ENCODE measurements at regions of chr12 and their contacts with region 1.

Region 1: DNA sequence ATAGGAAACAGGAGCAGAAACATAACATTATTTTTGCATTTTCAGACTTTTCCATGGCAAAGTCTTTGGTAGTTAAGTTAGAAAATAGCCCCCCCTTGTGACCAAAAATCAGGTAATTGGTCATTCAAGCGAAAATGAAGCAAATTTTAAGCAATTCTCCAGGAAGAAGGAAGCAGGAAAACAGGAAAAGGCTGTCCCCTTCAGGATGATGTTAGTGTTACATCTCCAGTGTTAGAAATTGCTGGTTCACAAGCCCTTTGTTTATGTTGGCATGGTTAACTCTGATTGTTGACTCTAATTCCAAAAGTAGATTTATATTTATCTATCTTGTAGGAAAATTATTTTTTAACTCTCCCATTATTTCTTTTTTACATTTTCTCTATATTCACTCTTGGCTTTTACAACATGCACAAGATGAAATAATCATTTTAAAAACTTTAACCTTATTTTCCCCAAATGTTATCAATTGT is 18.8 kb upstream of the GAS2L3 start:
- DNase-seq: peak; percentile 92
- ATAC-seq: peak; percentile 88
- H3K4me3 ChIP-seq: no peak overlapping the region
- H3K27ac ChIP-seq: no peak overlapping the region
- H3K4me1 ChIP-seq: no peaks in the 10 kb centered on the region
- H3K27me3 ChIP-seq: 0 out of 2 replicates have a peak, but pooled peaks cover 6% of the 10 kb centered on the region
- CTCF ChIP-seq: peak; percentile 98

Region 2: GRCh38 chr12:100058482-100059029 is 496.1 kb before region 1 on chr12:
- CTCF ChIA-PET with region 1: no interaction called
- POLR2A ChIA-PET with region 1: no interaction called
- intact Hi-C with region 1: loop called (anchors 10 kb)
- DNase-seq: peak; percentile 68
- ATAC-seq: peak; percentile 96
- H3K4me3 ChIP-seq: no peak overlapping the region
- H3K27ac ChIP-seq: no peak overlapping the region
- H3K4me1 ChIP-seq: peaks cover 6% of the 10 kb centered on the region; the same call in 1 of the 2 replicates
- H3K27me3 ChIP-seq: no peaks in the 10 kb centered on the region
- CTCF ChIP-seq: peak; percentile 52

Region 3: DNA sequence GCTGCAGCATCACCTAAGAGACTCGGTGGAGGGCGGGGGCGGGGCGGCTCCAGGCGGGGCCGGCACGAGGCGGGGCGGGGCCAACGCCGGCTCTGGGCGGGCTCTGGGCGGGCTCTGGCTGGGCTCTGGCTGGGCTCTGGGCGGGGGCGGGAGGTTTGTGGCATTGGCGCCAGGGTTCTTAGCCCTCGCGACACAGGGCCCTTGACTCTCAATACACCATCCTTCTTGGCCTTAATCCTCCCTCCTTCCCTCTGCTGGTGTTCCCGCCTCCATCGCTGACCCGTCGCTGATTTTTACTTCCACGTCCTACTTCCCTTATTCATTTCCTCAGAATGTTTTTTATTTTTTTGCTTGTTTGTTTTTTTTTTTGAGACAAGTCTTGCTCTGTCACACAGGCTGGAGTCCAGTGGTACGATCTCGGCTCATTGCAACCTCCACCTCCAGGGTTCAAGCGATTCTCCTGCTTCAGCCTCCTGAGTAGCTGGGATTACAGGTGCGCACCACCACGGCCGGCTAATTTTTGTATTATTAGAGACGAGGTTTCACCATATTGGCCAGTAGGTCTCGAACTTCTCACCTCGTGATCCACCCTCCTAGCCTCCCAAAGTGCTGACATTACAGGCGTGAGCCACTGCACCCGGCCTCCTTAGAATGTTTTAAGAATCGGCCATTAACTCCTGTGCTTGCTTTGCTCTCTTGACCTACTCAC is 411.6 kb before region 1 on chr12 and contains the start of gene BLTP3B:
- CTCF ChIA-PET with region 1: no interaction called
- POLR2A ChIA-PET with region 1: no interaction called
- intact Hi-C with region 1: loop called (anchors 5 kb)
- DNase-seq: peak; percentile 76
- ATAC-seq: peak; percentile 78
- H3K4me3 ChIP-seq: peak within 1 kb of the TSS; percentile 98
- H3K27ac ChIP-seq: peak within 1 kb of the TSS; percentile 64
- H3K4me1 ChIP-seq: peaks cover 32% of the 10 kb centered on the region
- H3K27me3 ChIP-seq: no peaks in the 10 kb centered on the region
- CTCF ChIP-seq: no peak
- total RNA-seq, gene BLTP3B: 29.0 and 32.0 TPM in 2 replicates

Region 4: DNA sequence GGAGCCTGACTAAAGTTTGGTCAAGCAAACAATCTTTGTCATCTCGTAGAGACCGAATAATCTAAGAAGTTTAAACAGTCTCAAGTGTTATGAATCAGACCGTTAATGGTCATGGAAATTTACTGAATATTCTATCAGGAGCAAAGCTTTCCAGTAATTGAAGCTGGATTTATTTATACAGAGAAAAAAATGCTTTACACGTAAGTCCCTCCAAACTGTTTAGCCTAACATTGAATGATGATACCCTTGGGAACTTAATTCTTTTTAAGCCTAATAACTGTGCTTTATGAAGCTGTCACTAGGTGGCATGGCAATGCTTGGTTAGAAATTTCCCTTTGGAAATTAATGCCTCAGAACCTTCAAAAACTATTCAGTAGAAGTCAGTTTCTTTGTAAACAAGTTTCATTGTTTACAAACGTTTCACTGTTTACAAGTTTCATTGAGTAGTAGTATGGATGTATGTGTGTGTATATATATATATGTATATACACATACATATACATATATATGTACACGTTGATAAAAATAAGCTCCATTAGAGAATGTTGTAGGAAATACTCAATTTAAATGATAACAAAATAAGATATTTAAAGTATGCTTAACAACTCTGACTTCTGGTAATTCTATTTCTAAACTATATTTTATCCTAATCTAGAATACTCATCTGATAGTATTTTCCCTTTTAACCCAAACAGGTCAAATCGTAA is 319.9 kb before region 1 on chr12:
- CTCF ChIA-PET with region 1: interaction called, 3 read pairs
- POLR2A ChIA-PET with region 1: interaction called, 10 read pairs
- intact Hi-C with region 1: loop called (anchors 1 kb)
- DNase-seq: peak; percentile 81
- ATAC-seq: peak; percentile 65
- H3K4me3 ChIP-seq: peak overlapping the region; percentile 53
- H3K27ac ChIP-seq: peak overlapping the region; percentile 66
- H3K4me1 ChIP-seq: peaks cover 34% of the 10 kb centered on the region
- H3K27me3 ChIP-seq: no peaks in the 10 kb centered on the region
- CTCF ChIP-seq: peak; percentile 93

Region 5: GRCh38 chr12:100391856-100392255 is 162.8 kb before region 1 on chr12:
- CTCF ChIA-PET with region 1: no interaction called
- POLR2A ChIA-PET with region 1: no interaction called
- intact Hi-C with region 1: loop called (anchors 1 kb)
- DNase-seq: peak; percentile 54
- ATAC-seq: peak; percentile 74
- H3K4me3 ChIP-seq: no peak overlapping the region
- H3K27ac ChIP-seq: no peak overlapping the region
- H3K4me1 ChIP-seq: no peaks in the 10 kb centered on the region
- H3K27me3 ChIP-seq: peaks cover 17% of the 10 kb centered on the region
- CTCF ChIP-seq: peak; percentile 67